Uterus (tissue), 4 donors: ENCODE measurements at regions of chr21 and their contacts with region 1.

Region 1: DNA sequence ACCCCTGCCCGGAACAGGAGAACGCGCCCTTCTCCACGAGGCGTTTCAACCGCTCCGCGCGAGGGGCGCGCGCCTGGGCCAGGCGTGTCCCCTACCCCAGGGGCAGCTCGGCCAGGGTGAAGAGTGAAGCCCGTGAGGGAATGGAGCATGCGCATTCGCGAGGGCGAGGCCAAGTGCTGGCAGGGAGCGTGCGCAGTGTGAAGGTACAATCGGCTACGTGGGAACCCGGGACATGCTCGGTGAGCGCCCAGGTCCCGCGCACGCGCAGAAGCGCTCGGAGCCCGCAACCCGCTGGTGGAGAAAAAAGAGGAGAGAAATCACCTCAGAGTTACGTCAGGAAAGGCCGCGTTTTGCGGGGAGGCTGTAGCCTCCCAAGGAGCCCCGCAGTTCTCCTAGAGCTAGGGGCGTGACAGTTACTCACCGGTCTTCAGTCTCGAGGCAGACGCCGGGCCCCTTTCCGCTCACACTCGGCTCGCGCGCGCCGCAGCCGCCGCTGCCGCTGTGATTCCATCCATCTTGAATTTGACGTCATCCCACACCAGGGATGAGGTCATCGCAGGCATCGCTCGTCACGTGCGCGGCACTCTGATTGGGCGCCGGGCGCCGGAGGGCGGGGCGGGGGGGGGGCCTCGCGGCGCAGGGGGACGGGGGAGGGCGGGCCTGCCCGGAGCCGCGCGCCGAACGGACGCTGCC is at the start of gene ZBTB21:
- DNase-seq: peak; percentile 99
- H3K4me3 ChIP-seq: peak within 1 kb of the TSS; percentile 73 to 85
- H3K27ac ChIP-seq: peak within 1 kb of the TSS; percentile 99
- H3K4me1 ChIP-seq: peaks cover 0 to 3% of the 10 kb centered on the region in 2 donors
- H3K27me3 ChIP-seq: no peaks in the 10 kb centered on the region
- CTCF ChIP-seq: no peak
- POLR2A ChIP-seq: peak; percentile 91 to 96
- total RNA-seq, gene ZBTB21: 2.8 to 29.9 (median 14.4) TPM

Region 2: GRCh38 chr21:41328660-41329607 is 681.0 kb before region 1 on chr21:
- intact Hi-C with region 1: no loop called
- DNase-seq: no peak
- H3K4me3 ChIP-seq: no peak overlapping the region
- H3K27ac ChIP-seq: no peak overlapping the region
- H3K4me1 ChIP-seq: no peaks in the 10 kb centered on the region
- H3K27me3 ChIP-seq: no peaks in the 10 kb centered on the region
- CTCF ChIP-seq: no peak
- POLR2A ChIP-seq: no peak

Region 3: GRCh38 chr21:41802684-41803083 is 207.3 kb before region 1 on chr21:
- intact Hi-C with region 1: no loop called
- DNase-seq: peak; percentile 67 to 72
- H3K4me3 ChIP-seq: no peak overlapping the region
- H3K27ac ChIP-seq: peak overlapping the region in 1 of 2 donors; percentile 11
- H3K4me1 ChIP-seq: no peaks in the 10 kb centered on the region
- H3K27me3 ChIP-seq: no peaks in the 10 kb centered on the region
- CTCF ChIP-seq: no peak
- POLR2A ChIP-seq: no peak

Region 4: GRCh38 chr21:41933313-41934086 is 76.5 kb before region 1 on chr21:
- intact Hi-C with region 1: loop called (anchors 10 kb)
- DNase-seq: no peak
- H3K4me3 ChIP-seq: peak overlapping the region; percentile 15 to 20
- H3K27ac ChIP-seq: peak overlapping the region; percentile 80 to 87
- H3K4me1 ChIP-seq: peaks cover 0 to 6% of the 10 kb centered on the region in 2 donors
- H3K27me3 ChIP-seq: no peaks in the 10 kb centered on the region
- CTCF ChIP-seq: peak; percentile 18 to 39 (median 35)
- POLR2A ChIP-seq: no peak